CD8-positive, alpha-beta memory T cell (primary cell): ENCODE measurements at regions of chr18 and their contacts with region 1.

Region 1: DNA sequence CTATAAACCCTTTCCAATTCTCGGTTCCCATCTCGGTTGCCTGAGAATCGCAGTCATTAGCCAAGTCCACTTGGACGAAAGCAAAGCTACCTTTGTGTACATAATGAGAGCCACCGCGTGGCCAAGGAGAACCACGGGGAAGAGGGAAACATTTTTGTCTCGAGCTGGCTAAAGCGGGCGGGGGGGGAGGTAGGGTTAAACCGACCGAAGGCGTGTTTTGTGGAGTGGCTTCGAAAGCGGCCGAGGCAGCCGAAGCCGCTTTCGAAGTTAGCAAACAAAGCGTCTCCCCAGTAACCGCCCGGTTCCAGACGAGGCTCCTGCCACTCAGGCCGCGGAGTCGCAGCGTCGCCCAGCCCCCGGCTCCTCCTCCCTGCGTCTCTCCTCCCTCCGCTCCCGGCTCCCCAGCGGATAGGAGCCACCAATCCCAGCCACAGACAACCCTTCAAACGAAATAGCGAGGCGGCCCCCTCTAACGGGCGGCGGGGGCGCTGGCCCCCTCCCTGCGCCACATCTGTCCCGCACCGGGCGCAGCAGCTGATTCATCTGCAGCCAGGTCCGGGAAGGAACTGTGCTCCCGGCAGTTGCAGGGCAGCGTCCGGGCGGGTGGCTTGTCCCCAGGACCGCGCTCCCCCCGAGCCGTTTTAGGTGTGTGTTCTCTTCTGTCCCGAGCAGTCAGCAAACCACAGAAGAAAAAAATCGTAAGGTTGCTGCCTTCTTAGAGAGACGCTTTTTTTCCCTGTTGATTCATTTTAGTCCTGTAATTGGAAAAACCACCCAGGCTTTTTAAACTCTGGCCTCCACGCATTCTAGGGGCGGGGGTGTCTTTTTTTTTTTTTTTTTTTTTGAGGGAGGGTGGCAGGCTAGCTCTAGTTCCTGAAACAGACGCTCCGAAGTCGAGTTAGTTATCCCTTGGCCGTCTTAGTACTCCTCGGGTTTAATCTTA is 1.8 kb upstream of the TGIF1 start:
- DNase-seq: peak; percentile 77 to 94 (median 89)
- H3K4me3 ChIP-seq: peak overlapping the region; percentile 96
- H3K4me3 Mint-ChIP-seq: peak overlapping the region; percentile 85 to 98 (median 96)
- H3K27ac ChIP-seq: peak overlapping the region; percentile 94
- H3K27ac Mint-ChIP-seq: peak overlapping the region; percentile 93 to 100 (median 100)
- H3K4me1 ChIP-seq: peaks cover 16% of the 10 kb centered on the region
- H3K4me1 Mint-ChIP-seq: peaks cover 22 to 33% (median 31%) of the 10 kb centered on the region in 3 donors
- H3K27me3 ChIP-seq: no peaks in the 10 kb centered on the region
- H3K27me3 Mint-ChIP-seq: peaks cover 0 to 19% of the 10 kb centered on the region in 2 donors

Region 2: GRCh38 chr18:2293109-2293839 is 1154.9 kb before region 1 on chr18:
- CTCF ChIA-PET with region 1: no interaction called
- POLR2A ChIA-PET with region 1: no interaction called
- DNase-seq: no peak
- H3K4me3 ChIP-seq: no peak overlapping the region
- H3K4me3 Mint-ChIP-seq: no peak overlapping the region
- H3K27ac ChIP-seq: no peak overlapping the region
- H3K27ac Mint-ChIP-seq: no peak overlapping the region
- H3K4me1 ChIP-seq: no peaks in the 10 kb centered on the region
- H3K4me1 Mint-ChIP-seq: no peaks in the 10 kb centered on the region
- H3K27me3 ChIP-seq: no peaks in the 10 kb centered on the region
- H3K27me3 Mint-ChIP-seq: peaks cover 11 to 73% of the 10 kb centered on the region in 2 donors

Region 3: GRCh38 chr18:3297025-3297984 is 150.9 kb before region 1 on chr18:
- CTCF ChIA-PET with region 1: interaction called, 22 read pairs
- POLR2A ChIA-PET with region 1: interaction called, 3 read pairs
- DNase-seq: peak; percentile 83 to 95 (median 86)
- H3K4me3 ChIP-seq: peak overlapping the region; percentile 92
- H3K4me3 Mint-ChIP-seq: peak overlapping the region; percentile 92 to 98 (median 95)
- H3K27ac ChIP-seq: peak overlapping the region; percentile 80
- H3K27ac Mint-ChIP-seq: peak overlapping the region; percentile 31 to 93 (median 86)
- H3K4me1 ChIP-seq: peaks cover 12% of the 10 kb centered on the region
- H3K4me1 Mint-ChIP-seq: peaks cover 8 to 12% (median 11%) of the 10 kb centered on the region in 3 donors
- H3K27me3 ChIP-seq: peaks cover 5% of the 10 kb centered on the region
- H3K27me3 Mint-ChIP-seq: peaks cover 8 to 34% of the 10 kb centered on the region in 2 donors

Region 4: GRCh38 chr18:3466045-3466444 is 17.9 kb after region 1 on chr18:
- CTCF ChIA-PET with region 1: interaction called, 57 read pairs
- POLR2A ChIA-PET with region 1: interaction called, 9 read pairs
- DNase-seq: no peak
- H3K4me3 ChIP-seq: no peak overlapping the region
- H3K4me3 Mint-ChIP-seq: no peak overlapping the region
- H3K27ac ChIP-seq: no peak overlapping the region
- H3K27ac Mint-ChIP-seq: peak overlapping the region in 3 of 8 donors; percentile 38 to 73 (median 61)
- H3K4me1 ChIP-seq: peaks cover 17% of the 10 kb centered on the region
- H3K4me1 Mint-ChIP-seq: peaks cover 22 to 27% (median 24%) of the 10 kb centered on the region in 3 donors
- H3K27me3 ChIP-seq: no peaks in the 10 kb centered on the region
- H3K27me3 Mint-ChIP-seq: no peaks in the 10 kb centered on the region

Region 5: GRCh38 chr18:3585656-3586509 is 137.7 kb after region 1 on chr18:
- CTCF ChIA-PET with region 1: interaction called, 100 read pairs
- POLR2A ChIA-PET with region 1: interaction called, 5 read pairs
- DNase-seq: peak; percentile 40 to 78 (median 59)
- H3K4me3 ChIP-seq: no peak overlapping the region
- H3K4me3 Mint-ChIP-seq: peak overlapping the region in 3 of 7 donors; percentile 20 to 53 (median 21)
- H3K27ac ChIP-seq: peak overlapping the region; percentile 27
- H3K27ac Mint-ChIP-seq: peak overlapping the region in 6 of 8 donors; percentile 1 to 53 (median 43)
- H3K4me1 ChIP-seq: no peaks in the 10 kb centered on the region
- H3K4me1 Mint-ChIP-seq: peaks cover 9 to 14% (median 13%) of the 10 kb centered on the region in 3 donors
- H3K27me3 ChIP-seq: no peaks in the 10 kb centered on the region
- H3K27me3 Mint-ChIP-seq: peaks cover 0 to 1% of the 10 kb centered on the region in 2 donors

Region 6: DNA sequence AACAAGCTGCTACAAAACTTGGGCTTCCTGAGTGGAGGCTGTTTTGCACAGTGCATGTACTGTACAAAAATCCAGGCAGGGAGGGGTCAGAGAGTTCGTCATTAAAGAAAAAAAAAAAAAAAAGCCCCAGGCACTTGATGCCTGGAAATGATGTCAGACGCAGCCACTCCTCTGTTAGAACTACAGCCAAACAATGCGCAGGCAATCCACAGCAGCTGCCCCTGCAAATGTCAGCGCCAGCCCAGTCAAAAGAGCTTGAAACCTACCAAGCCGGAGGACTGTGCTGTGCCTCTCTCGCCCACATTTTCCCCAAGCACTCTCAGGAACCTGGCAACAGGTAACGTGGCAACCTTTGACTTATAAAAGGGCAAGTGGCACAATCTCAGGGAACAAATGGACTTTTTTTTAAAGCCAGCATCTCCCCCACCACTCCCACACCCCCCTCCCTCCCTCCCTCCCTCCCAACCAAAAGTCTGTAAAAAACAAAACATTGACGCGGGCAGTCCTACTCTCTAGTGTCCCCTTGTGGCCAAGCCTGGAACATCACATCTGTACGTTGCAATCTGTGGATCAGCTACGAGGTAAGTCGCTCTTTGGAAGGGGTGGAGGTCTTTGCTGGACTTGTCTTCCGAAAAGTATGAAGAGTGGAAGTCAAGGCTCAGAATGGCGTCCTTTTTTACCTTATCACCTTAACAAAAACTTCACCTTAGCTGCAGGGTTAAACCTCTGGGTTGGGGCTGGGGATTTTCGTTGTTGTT is 145.9 kb after region 1 on chr18:
- CTCF ChIA-PET with region 1: interaction called, 100 read pairs
- POLR2A ChIA-PET with region 1: interaction called, 27 read pairs
- DNase-seq: peak; percentile 77 to 95 (median 93)
- H3K4me3 ChIP-seq: peak overlapping the region; percentile 74
- H3K4me3 Mint-ChIP-seq: peak overlapping the region; percentile 94 to 98 (median 95)
- H3K27ac ChIP-seq: peak overlapping the region; percentile 95
- H3K27ac Mint-ChIP-seq: peak overlapping the region; percentile 97 to 100 (median 99)
- H3K4me1 ChIP-seq: peaks cover 41% of the 10 kb centered on the region
- H3K4me1 Mint-ChIP-seq: peaks cover 49 to 64% (median 54%) of the 10 kb centered on the region in 3 donors
- H3K27me3 ChIP-seq: no peaks in the 10 kb centered on the region
- H3K27me3 Mint-ChIP-seq: no peaks in the 10 kb centered on the region

Region 7: GRCh38 chr18:3604498-3605408 is 156.6 kb after region 1 on chr18:
- CTCF ChIA-PET with region 1: interaction called, 3 read pairs
- POLR2A ChIA-PET with region 1: interaction called, 23 read pairs
- DNase-seq: peak in 2 of 5 donors; percentile 38 to 48
- H3K4me3 ChIP-seq: peak overlapping the region; percentile 57
- H3K4me3 Mint-ChIP-seq: no peak overlapping the region
- H3K27ac ChIP-seq: peak overlapping the region; percentile 94
- H3K27ac Mint-ChIP-seq: no peak overlapping the region
- H3K4me1 ChIP-seq: peaks cover 44% of the 10 kb centered on the region
- H3K4me1 Mint-ChIP-seq: peaks cover 13 to 15% (median 15%) of the 10 kb centered on the region in 3 donors
- H3K27me3 ChIP-seq: no peaks in the 10 kb centered on the region
- H3K27me3 Mint-ChIP-seq: no peaks in the 10 kb centered on the region